Aorta (tissue), 5 donors: ENCODE measurements at regions of chr3 and their contacts with region 1.

Region 1: GRCh38 chr3:193389335-193389734 is 10.8 kb upstream of the ATP13A5 start:
- DNase-seq: no peak
- ATAC-seq: no peak
- H3K4me3 ChIP-seq: no peak overlapping the region
- H3K27ac ChIP-seq: no peak overlapping the region
- H3K4me1 ChIP-seq: no peaks in the 10 kb centered on the region
- H3K27me3 ChIP-seq: no peaks in the 10 kb centered on the region

Region 2: GRCh38 chr3:193313053-193313958 is 76.0 kb before region 1 on chr3:
- intact Hi-C with region 1: loop called in 1 of 2 experiments (anchors 2 kb)
- DNase-seq: no peak
- ATAC-seq: no peak
- H3K4me3 ChIP-seq: no peak overlapping the region
- H3K27ac ChIP-seq: no peak overlapping the region
- H3K4me1 ChIP-seq: no peaks in the 10 kb centered on the region
- H3K27me3 ChIP-seq: no peaks in the 10 kb centered on the region